ENCODE measurements at regions of chr11 and their contacts with region 1.

Region 1: DNA sequence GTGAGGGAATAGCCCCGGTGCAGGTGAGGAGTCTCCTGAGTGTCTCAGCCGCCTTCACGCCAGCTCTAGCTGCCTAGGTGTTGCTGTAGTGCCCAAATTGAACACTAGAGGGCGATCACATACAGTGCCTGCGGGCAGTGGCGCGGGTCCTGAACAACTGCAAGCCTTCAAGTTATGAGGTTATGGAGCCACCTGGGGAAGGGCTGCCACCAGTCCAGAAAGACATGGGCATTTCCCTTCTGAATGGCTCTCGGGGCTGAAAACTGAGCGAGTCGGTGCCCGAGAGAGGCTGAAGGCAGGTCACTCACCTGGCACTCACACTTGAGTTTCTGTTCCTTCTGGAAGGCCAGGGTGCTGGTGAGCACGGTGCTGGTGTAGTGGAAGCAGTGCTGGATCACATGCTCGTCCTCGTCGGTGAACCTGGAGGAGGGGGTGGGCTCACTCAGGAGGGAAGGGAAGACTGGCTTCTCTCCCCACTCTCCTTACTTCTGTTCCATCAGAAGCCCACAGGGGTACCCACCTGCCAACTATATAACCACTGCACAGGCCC is 88.4 kb downstream of the PDE2A start:
- DNase-seq: peak; percentile 42 to 78 (median 77)
- ATAC-seq: peak; percentile 31 to 61
- H3K4me3 ChIP-seq: no peak overlapping the region
- H3K27ac ChIP-seq: no peak overlapping the region
- H3K4me1 ChIP-seq: no peaks in the 10 kb centered on the region
- H3K27me3 ChIP-seq: no peaks in the 10 kb centered on the region

Region 2: DNA sequence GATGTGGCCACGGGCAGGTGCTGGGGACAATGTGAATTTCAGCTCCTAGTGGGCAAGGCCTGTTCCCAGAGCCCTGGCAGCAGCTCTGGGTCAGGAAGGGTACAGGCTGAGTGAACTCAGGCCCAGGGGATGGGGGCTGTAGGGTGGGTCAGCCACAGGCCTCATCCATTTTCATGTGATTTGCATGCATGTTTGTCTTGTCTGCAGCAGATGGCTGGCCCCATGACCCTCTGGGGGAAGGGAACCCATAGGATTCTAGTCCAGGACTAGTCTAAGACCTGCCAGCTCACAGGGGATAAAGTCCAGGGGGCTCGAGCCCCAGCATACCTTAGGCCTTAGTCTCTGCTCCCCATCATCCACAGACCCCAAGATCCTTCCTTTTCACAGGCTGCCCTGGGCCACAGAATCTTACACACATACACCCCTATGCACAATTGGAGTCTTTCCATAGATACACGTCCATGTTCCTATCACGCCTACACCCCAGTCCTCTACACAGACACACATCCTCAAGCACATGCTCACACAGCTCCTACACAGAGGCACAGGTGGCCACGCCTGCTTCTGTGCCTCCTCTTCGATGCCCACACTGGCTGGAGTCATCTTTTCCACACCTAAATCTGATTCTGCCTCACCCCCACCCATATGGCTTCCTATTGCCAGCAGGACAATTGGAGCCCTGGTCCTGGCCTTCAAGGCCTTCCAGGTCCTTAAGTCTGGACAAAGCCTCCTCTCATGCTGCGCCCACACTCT is 62.7 kb after region 1 on chr11:
- intact Hi-C with region 1: loop called in 2 of 4 experiments (anchors 5 kb)
- DNase-seq: no peak
- ATAC-seq: no peak
- H3K4me3 ChIP-seq: no peak overlapping the region
- H3K27ac ChIP-seq: no peak overlapping the region
- H3K4me1 ChIP-seq: no peaks in the 10 kb centered on the region
- H3K27me3 ChIP-seq: no peaks in the 10 kb centered on the region

Region 3: DNA sequence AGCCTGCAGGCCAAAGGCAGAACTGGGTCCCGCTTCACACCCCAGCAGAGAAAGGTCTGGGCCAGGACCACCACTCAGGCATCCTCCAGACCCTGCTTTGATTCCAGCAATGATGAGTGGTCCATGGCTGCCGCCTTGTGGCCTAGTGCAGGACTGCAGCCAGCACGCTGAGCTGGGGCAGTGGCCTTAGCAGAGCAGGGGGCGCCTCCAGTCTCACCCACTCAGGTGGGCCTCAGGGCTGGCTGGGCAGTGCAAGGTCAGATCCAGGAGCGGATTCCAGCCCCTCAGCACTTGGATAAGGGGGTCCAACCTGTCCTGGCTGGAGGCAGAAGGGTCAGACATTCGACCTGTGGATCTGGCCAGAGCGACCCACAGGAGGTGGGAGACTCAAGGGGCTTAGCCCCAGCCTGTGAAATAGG is 98.0 kb after region 1 on chr11:
- intact Hi-C with region 1: loop called in 2 of 4 experiments (anchors 5 kb)
- DNase-seq: peak; percentile 61 to 87 (median 85)
- ATAC-seq: peak; percentile 47 to 59
- H3K4me3 ChIP-seq: no peak overlapping the region
- H3K27ac ChIP-seq: no peak overlapping the region
- H3K4me1 ChIP-seq: peaks cover 3% of the 10 kb centered on the region
- H3K27me3 ChIP-seq: no peaks in the 10 kb centered on the region

Region 4: GRCh38 chr11:72939031-72939430 is 353.2 kb after region 1 on chr11:
- intact Hi-C with region 1: no loop called
- DNase-seq: no peak
- ATAC-seq: no peak
- H3K4me3 ChIP-seq: no peak overlapping the region
- H3K27ac ChIP-seq: no peak overlapping the region
- H3K4me1 ChIP-seq: peaks cover 4% of the 10 kb centered on the region
- H3K27me3 ChIP-seq: no peaks in the 10 kb centered on the region